PC-9 (cell line): ENCODE measurements at regions of chr7 and their contacts with region 1.

Region 1: DNA sequence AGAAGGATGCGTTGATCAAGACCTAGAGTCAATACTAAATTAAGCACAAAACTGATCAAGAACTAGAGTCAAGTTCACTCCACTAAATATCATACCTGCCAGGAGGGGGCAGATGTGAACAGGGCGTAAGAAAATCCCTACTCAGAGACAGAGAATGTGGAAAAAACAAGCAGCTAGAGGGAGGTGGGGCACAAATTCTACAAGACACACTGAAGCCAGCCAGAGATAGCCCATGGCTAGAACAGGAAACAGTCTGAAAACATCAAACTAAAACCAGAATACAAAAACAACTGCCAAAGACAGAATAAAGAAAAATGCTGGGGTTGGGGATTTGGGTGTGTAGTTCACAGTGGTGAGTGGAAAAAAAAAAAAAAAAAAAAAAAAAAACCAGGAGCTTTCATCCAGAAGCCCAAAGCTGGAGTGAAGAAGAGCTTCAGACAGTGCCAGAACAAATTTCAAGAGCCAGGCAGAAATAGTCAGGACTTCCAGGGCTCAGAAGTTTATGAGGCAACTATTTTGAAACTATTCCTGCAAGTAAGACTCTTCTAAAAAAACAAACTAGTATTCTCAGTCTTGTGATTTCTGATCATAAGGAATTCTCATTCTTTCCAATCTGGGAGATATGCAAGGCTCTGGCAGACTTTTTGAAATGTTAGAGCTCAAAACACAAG is 118.3 kb downstream of the CCDC71L start:
- DNase-seq: peak; percentile 61 to 70
- H3K4me3 ChIP-seq: no peak overlapping the region
- H3K27ac ChIP-seq: no peak overlapping the region
- H3K4me1 ChIP-seq: peaks cover 8% of the 10 kb centered on the region; the same call in 1 of the 2 replicates
- H3K27me3 ChIP-seq: no peaks in the 10 kb centered on the region
- CTCF ChIP-seq: peak; percentile 82

Region 2: GRCh38 chr7:106425017-106425719 is 117.5 kb before region 1 on chr7:
- CTCF ChIA-PET with region 1: no interaction called
- POLR2A ChIA-PET with region 1: interaction called, 33 read pairs
- intact Hi-C with region 1: no loop called
- DNase-seq: peak; percentile 57 to 89
- H3K4me3 ChIP-seq: peak overlapping the region; percentile 30; the same call in 1 of the 2 replicates
- H3K27ac ChIP-seq: peak overlapping the region; percentile 92
- H3K4me1 ChIP-seq: peaks cover 35% of the 10 kb centered on the region
- H3K27me3 ChIP-seq: no peaks in the 10 kb centered on the region
- CTCF ChIP-seq: no peak

Region 3: DNA sequence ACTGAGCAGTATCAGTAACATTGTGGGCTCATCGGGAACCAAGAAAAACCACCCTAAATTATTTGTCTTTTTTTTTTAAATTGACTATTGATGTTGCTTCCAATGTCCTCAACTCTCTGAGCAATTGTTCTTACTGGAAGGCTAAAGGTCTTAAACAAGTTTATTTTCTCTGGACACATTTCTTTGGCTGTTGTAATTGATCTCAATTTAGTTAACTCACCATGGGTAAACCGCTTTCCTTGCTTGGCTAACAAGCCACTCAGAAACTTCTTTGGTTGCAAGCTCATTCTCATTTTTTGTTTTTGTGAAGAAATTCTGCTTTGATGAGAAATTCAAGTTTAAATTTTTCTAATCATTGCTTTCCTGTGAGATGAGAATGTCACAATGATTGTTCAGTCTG is 92.7 kb after region 1 on chr7:
- CTCF ChIA-PET with region 1: no interaction called
- POLR2A ChIA-PET with region 1: no interaction called
- intact Hi-C with region 1: no loop called
- DNase-seq: no peak
- H3K4me3 ChIP-seq: no peak overlapping the region
- H3K27ac ChIP-seq: no peak overlapping the region
- H3K4me1 ChIP-seq: no peaks in the 10 kb centered on the region
- H3K27me3 ChIP-seq: peaks cover 31% of the 10 kb centered on the region
- CTCF ChIP-seq: no peak

Region 4: GRCh38 chr7:106736508-106737201 is 194.0 kb after region 1 on chr7:
- CTCF ChIA-PET with region 1: interaction called, 27 read pairs
- POLR2A ChIA-PET with region 1: no interaction called
- intact Hi-C with region 1: loop called (anchors 1 kb)
- DNase-seq: peak; percentile 33 to 58
- H3K4me3 ChIP-seq: no peak overlapping the region
- H3K27ac ChIP-seq: peak overlapping the region; percentile 2
- H3K4me1 ChIP-seq: no peaks in the 10 kb centered on the region
- H3K27me3 ChIP-seq: no peaks in the 10 kb centered on the region
- CTCF ChIP-seq: peak; percentile 66

Region 5: GRCh38 chr7:107007007-107007891 is 464.6 kb after region 1 on chr7:
- CTCF ChIA-PET with region 1: interaction called, 11 read pairs
- POLR2A ChIA-PET with region 1: no interaction called
- intact Hi-C with region 1: no loop called
- DNase-seq: no peak
- H3K4me3 ChIP-seq: no peak overlapping the region
- H3K27ac ChIP-seq: no peak overlapping the region
- H3K4me1 ChIP-seq: no peaks in the 10 kb centered on the region
- H3K27me3 ChIP-seq: no peaks in the 10 kb centered on the region
- CTCF ChIP-seq: no peak